ENCODE measurements at regions of chr2 and their contacts with region 1.

Region 1: DNA sequence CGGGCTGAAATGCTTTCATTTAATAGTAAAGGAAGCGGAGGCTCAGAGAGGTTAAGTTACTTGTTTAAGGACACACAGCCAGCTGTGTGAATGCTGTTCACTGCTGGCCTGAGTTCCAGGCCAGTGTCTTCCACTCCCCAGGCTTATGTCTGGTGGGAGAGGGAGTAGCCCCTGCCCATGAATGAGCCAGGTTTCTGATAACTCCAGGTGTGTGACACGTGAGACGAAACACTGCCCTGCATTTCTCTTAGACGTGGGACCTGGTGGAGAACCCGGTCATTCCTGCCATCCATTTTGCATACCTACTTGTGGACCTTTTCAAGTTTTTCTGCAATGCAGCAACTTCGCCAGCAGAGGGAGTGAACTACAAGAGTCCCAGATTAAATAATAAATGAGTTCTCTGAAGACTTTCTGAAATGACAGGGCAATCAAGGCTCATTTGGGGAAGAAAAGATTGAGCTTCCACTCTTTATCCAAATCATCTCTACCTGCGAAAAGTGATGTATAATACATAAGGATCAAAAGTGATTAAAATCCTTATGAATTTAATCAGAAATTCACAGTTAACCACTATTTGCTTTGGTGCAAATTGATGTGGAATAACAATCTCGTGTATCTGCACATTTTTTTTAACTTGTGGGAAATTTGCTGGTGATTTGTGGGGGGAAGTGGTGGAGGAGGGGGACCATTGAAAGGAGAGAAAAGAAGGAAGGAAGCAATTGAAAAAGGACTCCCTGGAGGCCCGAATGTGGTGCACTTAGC is 79.4 kb upstream of the ASB18 start:
- DNase-seq: peak; percentile 71
- ATAC-seq: peak; percentile 17
- H3K4me3 ChIP-seq: no peak overlapping the region
- H3K4me3 Mint-ChIP-seq: no peak overlapping the region
- H3K27ac ChIP-seq: no peak overlapping the region
- H3K27ac Mint-ChIP-seq: no peak overlapping the region
- H3K4me1 ChIP-seq: no peaks in the 10 kb centered on the region
- H3K4me1 Mint-ChIP-seq: no peaks in the 10 kb centered on the region
- H3K27me3 ChIP-seq: peaks cover 0 to 6% (median 2%) of the 10 kb centered on the region in 4 experiments
- H3K27me3 Mint-ChIP-seq: peaks cover 10% of the 10 kb centered on the region
- CTCF ChIP-seq: peak; percentile 86

Region 2: GRCh38 chr2:236359426-236360045 is 16.0 kb after region 1 on chr2:
- CTCF ChIA-PET with region 1: no interaction called
- POLR2A ChIA-PET with region 1: no interaction called
- intact Hi-C with region 1: no loop called
- DNase-seq: no peak
- ATAC-seq: no peak
- H3K4me3 ChIP-seq: no peak overlapping the region
- H3K4me3 Mint-ChIP-seq: no peak overlapping the region
- H3K27ac ChIP-seq: no peak overlapping the region
- H3K27ac Mint-ChIP-seq: no peak overlapping the region
- H3K4me1 ChIP-seq: no peaks in the 10 kb centered on the region
- H3K4me1 Mint-ChIP-seq: no peaks in the 10 kb centered on the region
- H3K27me3 ChIP-seq: peaks cover 0 to 6% (median 0%) of the 10 kb centered on the region in 4 experiments
- H3K27me3 Mint-ChIP-seq: peaks cover 6% of the 10 kb centered on the region
- CTCF ChIP-seq: no peak

Region 3: GRCh38 chr2:236376566-236377244 is 33.1 kb after region 1 on chr2:
- CTCF ChIA-PET with region 1: no interaction called
- POLR2A ChIA-PET with region 1: no interaction called
- intact Hi-C with region 1: no loop called
- DNase-seq: no peak
- ATAC-seq: no peak
- H3K4me3 ChIP-seq: no peak overlapping the region
- H3K4me3 Mint-ChIP-seq: no peak overlapping the region
- H3K27ac ChIP-seq: no peak overlapping the region
- H3K27ac Mint-ChIP-seq: no peak overlapping the region
- H3K4me1 ChIP-seq: no peaks in the 10 kb centered on the region
- H3K4me1 Mint-ChIP-seq: no peaks in the 10 kb centered on the region
- H3K27me3 ChIP-seq: peaks cover 0 to 4% (median 0%) of the 10 kb centered on the region in 4 experiments
- H3K27me3 Mint-ChIP-seq: peaks cover 14% of the 10 kb centered on the region
- CTCF ChIP-seq: no peak

Region 4: DNA sequence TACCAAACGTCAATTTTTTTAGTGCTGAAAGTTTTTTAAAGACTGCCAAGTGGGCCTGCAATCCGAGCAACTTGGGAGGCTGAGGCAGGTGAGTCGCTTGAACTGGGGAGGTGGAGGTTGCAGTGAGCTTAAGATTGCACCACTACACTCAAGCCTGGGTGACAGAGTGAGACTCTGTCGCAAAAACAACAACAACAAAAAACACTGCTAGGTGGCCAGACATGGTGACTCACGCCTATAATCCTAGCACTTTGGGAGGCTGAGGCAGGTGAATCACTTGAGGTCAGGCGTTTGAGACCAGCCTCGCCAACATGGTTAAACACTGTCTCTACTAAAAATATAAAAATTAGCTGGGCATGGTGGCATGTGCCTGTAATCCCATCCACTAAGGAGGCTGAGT is 539.4 kb after region 1 on chr2:
- CTCF ChIA-PET with region 1: no interaction called
- POLR2A ChIA-PET with region 1: no interaction called
- intact Hi-C with region 1: no loop called
- DNase-seq: no peak
- ATAC-seq: no peak
- H3K4me3 ChIP-seq: no peak overlapping the region
- H3K4me3 Mint-ChIP-seq: no peak overlapping the region
- H3K27ac ChIP-seq: no peak overlapping the region
- H3K27ac Mint-ChIP-seq: no peak overlapping the region
- H3K4me1 ChIP-seq: no peaks in the 10 kb centered on the region
- H3K4me1 Mint-ChIP-seq: no peaks in the 10 kb centered on the region
- H3K27me3 ChIP-seq: no peaks in the 10 kb centered on the region
- H3K27me3 Mint-ChIP-seq: peaks cover 8% of the 10 kb centered on the region
- CTCF ChIP-seq: no peak

Region 5: GRCh38 chr2:237060534-237061312 is 717.1 kb after region 1 on chr2:
- CTCF ChIA-PET with region 1: interaction called, 23 read pairs
- POLR2A ChIA-PET with region 1: no interaction called
- intact Hi-C with region 1: loop called (anchors 1 kb)
- DNase-seq: peak; percentile 56
- ATAC-seq: no peak
- H3K4me3 ChIP-seq: no peak overlapping the region
- H3K4me3 Mint-ChIP-seq: no peak overlapping the region
- H3K27ac ChIP-seq: no peak overlapping the region
- H3K27ac Mint-ChIP-seq: no peak overlapping the region
- H3K4me1 ChIP-seq: peaks cover 21 to 33% of the 10 kb centered on the region in 2 donors
- H3K4me1 Mint-ChIP-seq: peaks cover 36% of the 10 kb centered on the region
- H3K27me3 ChIP-seq: peaks cover 0 to 3% (median 0%) of the 10 kb centered on the region in 4 experiments
- H3K27me3 Mint-ChIP-seq: peaks cover 9% of the 10 kb centered on the region
- CTCF ChIP-seq: peak; percentile 55

Region 6: GRCh38 chr2:237072067-237072931 is 728.7 kb after region 1 on chr2:
- CTCF ChIA-PET with region 1: interaction called, 16 read pairs
- POLR2A ChIA-PET with region 1: no interaction called
- intact Hi-C with region 1: loop called (anchors 1 kb)
- DNase-seq: peak; percentile 70
- ATAC-seq: peak; percentile 47
- H3K4me3 ChIP-seq: no peak overlapping the region
- H3K4me3 Mint-ChIP-seq: no peak overlapping the region
- H3K27ac ChIP-seq: no peak overlapping the region
- H3K27ac Mint-ChIP-seq: no peak overlapping the region
- H3K4me1 ChIP-seq: no peaks in the 10 kb centered on the region
- H3K4me1 Mint-ChIP-seq: no peaks in the 10 kb centered on the region
- H3K27me3 ChIP-seq: no peaks in the 10 kb centered on the region
- H3K27me3 Mint-ChIP-seq: no peaks in the 10 kb centered on the region
- CTCF ChIP-seq: peak; percentile 99

Measured in B cell (primary cell).